ENCODE measurements at regions of chr17 and their contacts with region 1.

Region 1: GRCh38 chr17:8073627-8074484 is 13.7 kb downstream of the ALOX12B start:
- DNase-seq: peak; percentile 85

Region 2: GRCh38 chr17:8029135-8029534 is 44.7 kb before region 1 on chr17:
- CTCF ChIA-PET with region 1: no interaction called
- POLR2A ChIA-PET with region 1: no interaction called
- DNase-seq: no peak

Region 3: GRCh38 chr17:8048236-8048635 is 25.6 kb before region 1 on chr17:
- CTCF ChIA-PET with region 1: no interaction called
- POLR2A ChIA-PET with region 1: no interaction called
- DNase-seq: no peak

Region 4: DNA sequence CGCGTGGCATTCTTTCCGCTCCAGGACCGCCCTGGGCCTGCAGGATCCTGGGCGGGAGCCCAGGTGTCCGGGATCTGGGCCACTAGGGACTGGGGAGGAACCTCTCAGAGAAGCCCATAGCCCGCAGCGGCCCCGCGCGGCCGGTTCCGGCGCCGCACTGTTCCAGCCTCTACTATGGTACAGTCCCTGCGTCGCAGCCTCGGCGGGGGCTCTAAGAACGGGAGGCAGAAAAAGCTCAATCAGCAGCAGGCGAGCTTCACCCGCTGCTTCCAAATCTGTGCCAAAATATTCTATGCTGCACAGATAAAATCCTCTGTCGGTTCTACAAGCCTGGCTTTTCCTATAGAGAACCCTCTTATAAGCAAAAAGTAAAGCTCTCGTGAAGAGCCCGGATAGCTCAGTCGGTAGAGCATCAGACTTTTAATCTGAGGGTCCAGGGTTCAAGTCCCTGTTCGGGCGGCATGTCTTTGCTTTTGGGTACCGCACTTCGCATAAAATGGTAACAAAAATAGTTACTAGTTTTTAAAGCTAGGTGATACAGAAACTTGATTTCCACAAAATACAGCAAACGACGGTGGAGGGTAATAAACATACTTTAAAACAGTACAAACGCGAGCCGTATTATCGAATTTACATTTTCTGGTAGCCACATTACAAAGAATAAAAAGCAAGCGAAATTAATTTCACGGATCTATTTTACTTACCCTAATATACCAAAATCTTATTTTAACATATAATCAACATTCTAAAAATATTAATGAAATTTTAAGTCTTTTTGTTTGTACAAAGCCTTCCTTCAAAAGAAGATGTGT is 45.1 kb after region 1 on chr17:
- CTCF ChIA-PET with region 1: interaction called, 11 read pairs
- POLR2A ChIA-PET with region 1: interaction called, 3 read pairs
- DNase-seq: peak; percentile 81